CD14-positive monocyte (primary cell): ENCODE measurements at regions of chr3 and their contacts with region 1.

Region 1: DNA sequence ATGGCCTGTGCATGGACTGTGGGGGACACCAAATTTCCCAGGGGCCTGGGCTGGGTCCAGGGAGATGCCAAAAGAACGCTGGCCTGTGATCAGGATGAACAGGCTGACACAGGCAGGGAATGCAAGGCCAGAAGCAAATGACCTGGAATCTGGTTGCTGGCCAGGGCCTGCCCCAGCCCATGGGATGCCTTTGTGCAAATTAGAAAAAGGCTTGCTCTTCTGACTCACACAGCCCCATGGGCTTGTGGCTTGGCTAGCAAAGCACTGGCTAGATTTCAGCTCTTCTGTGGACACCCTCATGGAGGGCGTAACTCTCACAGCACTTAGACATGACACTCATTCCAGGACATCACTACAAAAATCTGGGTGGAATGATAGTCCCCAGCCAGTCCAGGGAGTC is 356.0 kb downstream of the SHQ1 start:
- DNase-seq: no peak
- H3K4me3 ChIP-seq: no peak overlapping the region
- H3K4me3 Mint-ChIP-seq: no peak overlapping the region
- H3K27ac ChIP-seq: no peak overlapping the region
- H3K27ac Mint-ChIP-seq: no peak overlapping the region
- H3K4me1 ChIP-seq: peaks cover 51 to 53% of the 10 kb centered on the region in 2 donors
- H3K4me1 Mint-ChIP-seq: peaks cover 61% of the 10 kb centered on the region
- H3K27me3 ChIP-seq: no peaks in the 10 kb centered on the region
- H3K27me3 Mint-ChIP-seq: peaks cover 0 to 3% (median 0%) of the 10 kb centered on the region in 3 donors
- CTCF ChIP-seq: no peak

Region 2: DNA sequence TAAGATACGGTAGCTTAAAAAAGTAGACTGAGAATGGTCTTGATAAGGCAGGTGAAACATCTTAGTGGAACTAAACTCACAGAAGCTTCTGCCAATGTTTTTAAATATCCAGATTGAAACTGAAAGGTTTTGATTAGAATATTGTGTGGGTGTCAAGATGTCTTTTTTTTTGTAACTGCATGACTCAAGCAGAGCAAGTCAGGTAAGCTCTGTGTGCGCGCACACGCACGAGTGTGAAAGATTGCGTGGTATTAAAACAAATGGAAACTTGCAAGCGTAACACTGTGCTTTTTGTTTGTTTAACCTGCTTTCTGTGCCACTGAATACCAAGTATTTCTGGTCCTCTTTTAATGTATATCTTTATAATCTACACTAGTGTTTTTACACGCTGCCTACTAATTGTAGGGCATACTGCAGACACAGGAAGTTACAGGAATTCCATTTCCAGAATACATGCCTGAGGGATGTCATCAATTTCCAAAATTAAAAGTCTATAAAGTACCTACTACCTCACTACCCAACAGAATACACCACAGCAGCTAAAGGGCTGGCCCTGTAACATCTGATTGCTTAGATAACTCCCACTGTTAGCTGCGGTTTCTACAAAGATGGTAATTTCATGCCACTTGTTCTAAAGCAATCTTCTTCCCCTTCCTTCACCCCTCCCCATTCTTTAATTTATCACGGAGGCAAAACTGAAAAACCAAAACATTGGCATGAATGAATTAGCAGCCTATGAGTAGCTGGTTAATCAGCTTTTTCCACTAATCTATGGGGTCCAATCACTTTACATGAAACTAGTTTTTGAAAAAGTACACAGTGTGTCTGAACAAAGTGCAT is 116.8 kb before region 1 on chr3:
- intact Hi-C with region 1: no loop called
- DNase-seq: no peak
- H3K4me3 ChIP-seq: no peak overlapping the region
- H3K4me3 Mint-ChIP-seq: no peak overlapping the region
- H3K27ac ChIP-seq: no peak overlapping the region
- H3K27ac Mint-ChIP-seq: no peak overlapping the region
- H3K4me1 ChIP-seq: peaks cover 13 to 26% of the 10 kb centered on the region in 2 donors
- H3K4me1 Mint-ChIP-seq: peaks cover 31% of the 10 kb centered on the region
- H3K27me3 ChIP-seq: no peaks in the 10 kb centered on the region
- H3K27me3 Mint-ChIP-seq: no peaks in the 10 kb centered on the region
- CTCF ChIP-seq: no peak

Region 3: GRCh38 chr3:72533591-72534473 is 41.6 kb after region 1 on chr3:
- intact Hi-C with region 1: loop called in 1 of 2 experiments (anchors 5 kb)
- DNase-seq: peak; percentile 82 to 84 (median 82)
- H3K4me3 ChIP-seq: no peak overlapping the region
- H3K4me3 Mint-ChIP-seq: peak overlapping the region in 1 of 2 donors; percentile 84
- H3K27ac ChIP-seq: peak overlapping the region in 1 of 2 donors; percentile 37
- H3K27ac Mint-ChIP-seq: peak overlapping the region; percentile 0 to 84 (median 63)
- H3K4me1 ChIP-seq: peaks cover 8 to 11% of the 10 kb centered on the region in 2 donors
- H3K4me1 Mint-ChIP-seq: peaks cover 21% of the 10 kb centered on the region
- H3K27me3 ChIP-seq: no peaks in the 10 kb centered on the region
- H3K27me3 Mint-ChIP-seq: peaks cover 0 to 13% (median 6%) of the 10 kb centered on the region in 3 donors
- CTCF ChIP-seq: no peak

Region 4: GRCh38 chr3:72629191-72629631 is 137.0 kb after region 1 on chr3:
- intact Hi-C with region 1: loop called (anchors 5 kb)
- DNase-seq: peak; percentile 87 to 95 (median 92)
- H3K4me3 ChIP-seq: peak overlapping the region in 1 of 3 experiments; percentile 8
- H3K4me3 Mint-ChIP-seq: no peak overlapping the region
- H3K27ac ChIP-seq: peak overlapping the region; percentile 71 to 81
- H3K27ac Mint-ChIP-seq: peak overlapping the region; percentile 78 to 96 (median 93)
- H3K4me1 ChIP-seq: peaks cover 58 to 68% of the 10 kb centered on the region in 2 donors
- H3K4me1 Mint-ChIP-seq: peaks cover 58% of the 10 kb centered on the region
- H3K27me3 ChIP-seq: no peaks in the 10 kb centered on the region
- H3K27me3 Mint-ChIP-seq: peaks cover 0 to 5% (median 4%) of the 10 kb centered on the region in 3 donors
- CTCF ChIP-seq: no peak

Region 5: GRCh38 chr3:72661115-72661457 is 168.8 kb after region 1 on chr3:
- intact Hi-C with region 1: no loop called
- DNase-seq: no peak
- H3K4me3 ChIP-seq: no peak overlapping the region
- H3K4me3 Mint-ChIP-seq: no peak overlapping the region
- H3K27ac ChIP-seq: no peak overlapping the region
- H3K27ac Mint-ChIP-seq: no peak overlapping the region
- H3K4me1 ChIP-seq: no peaks in the 10 kb centered on the region
- H3K4me1 Mint-ChIP-seq: peaks cover 5% of the 10 kb centered on the region
- H3K27me3 ChIP-seq: no peaks in the 10 kb centered on the region
- H3K27me3 Mint-ChIP-seq: peaks cover 5 to 13% (median 10%) of the 10 kb centered on the region in 3 donors
- CTCF ChIP-seq: no peak

Region 6: GRCh38 chr3:72673011-72673771 is 181.0 kb after region 1 on chr3:
- intact Hi-C with region 1: no loop called
- DNase-seq: no peak
- H3K4me3 ChIP-seq: no peak overlapping the region
- H3K4me3 Mint-ChIP-seq: no peak overlapping the region
- H3K27ac ChIP-seq: no peak overlapping the region
- H3K27ac Mint-ChIP-seq: peak overlapping the region in 2 of 7 donors; percentile 8 to 35
- H3K4me1 ChIP-seq: no peaks in the 10 kb centered on the region
- H3K4me1 Mint-ChIP-seq: no peaks in the 10 kb centered on the region
- H3K27me3 ChIP-seq: no peaks in the 10 kb centered on the region
- H3K27me3 Mint-ChIP-seq: peaks cover 3 to 4% (median 4%) of the 10 kb centered on the region in 3 donors
- CTCF ChIP-seq: no peak

Region 7: DNA sequence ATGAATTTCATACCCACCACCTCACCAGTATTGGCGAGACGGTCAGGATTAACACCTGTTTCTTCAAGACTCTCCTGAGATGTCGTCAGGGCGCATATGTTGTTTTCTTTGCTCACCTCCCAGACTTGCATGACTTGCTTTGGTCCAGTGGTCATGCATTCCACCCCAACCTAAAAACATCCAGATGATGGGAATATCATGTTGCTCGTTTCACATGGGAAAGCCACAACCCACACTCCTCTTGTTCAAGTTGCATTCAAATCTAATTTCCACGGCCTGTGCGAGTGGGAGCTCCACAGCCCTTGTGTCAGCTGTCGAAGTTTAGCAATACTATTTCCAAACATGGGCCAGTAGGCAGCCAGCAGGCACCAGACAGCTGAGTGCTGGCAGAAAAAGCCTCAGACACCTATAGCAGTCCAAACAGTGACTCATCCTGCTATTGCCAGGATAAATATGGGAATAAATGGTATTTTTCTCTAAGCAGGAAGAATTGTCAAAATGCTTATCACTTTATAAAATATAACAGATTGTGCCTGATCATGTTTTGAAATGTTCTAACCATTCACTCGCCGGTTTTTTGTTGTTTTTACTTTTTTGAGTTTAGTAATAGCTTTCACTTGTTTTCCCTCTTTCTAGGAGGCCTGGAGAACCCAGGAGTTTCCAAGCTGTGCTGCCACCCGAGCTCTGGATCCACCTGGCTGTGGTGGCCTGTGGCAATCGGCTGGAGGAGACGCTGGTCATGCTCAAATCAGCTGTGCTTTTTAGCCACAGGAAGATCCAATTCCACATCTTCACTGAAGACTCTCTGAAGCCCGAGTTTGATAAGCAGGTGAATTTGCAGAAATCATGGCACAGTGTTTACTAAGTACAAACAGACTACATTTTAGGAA is 415.7 kb after region 1 on chr3:
- intact Hi-C with region 1: no loop called
- DNase-seq: no peak
- H3K4me3 ChIP-seq: no peak overlapping the region
- H3K4me3 Mint-ChIP-seq: no peak overlapping the region
- H3K27ac ChIP-seq: no peak overlapping the region
- H3K27ac Mint-ChIP-seq: no peak overlapping the region
- H3K4me1 ChIP-seq: no peaks in the 10 kb centered on the region
- H3K4me1 Mint-ChIP-seq: no peaks in the 10 kb centered on the region
- H3K27me3 ChIP-seq: no peaks in the 10 kb centered on the region
- H3K27me3 Mint-ChIP-seq: no peaks in the 10 kb centered on the region
- CTCF ChIP-seq: no peak